ENCODE measurements at regions of chr14 and their contacts with region 1.

Region 1: DNA sequence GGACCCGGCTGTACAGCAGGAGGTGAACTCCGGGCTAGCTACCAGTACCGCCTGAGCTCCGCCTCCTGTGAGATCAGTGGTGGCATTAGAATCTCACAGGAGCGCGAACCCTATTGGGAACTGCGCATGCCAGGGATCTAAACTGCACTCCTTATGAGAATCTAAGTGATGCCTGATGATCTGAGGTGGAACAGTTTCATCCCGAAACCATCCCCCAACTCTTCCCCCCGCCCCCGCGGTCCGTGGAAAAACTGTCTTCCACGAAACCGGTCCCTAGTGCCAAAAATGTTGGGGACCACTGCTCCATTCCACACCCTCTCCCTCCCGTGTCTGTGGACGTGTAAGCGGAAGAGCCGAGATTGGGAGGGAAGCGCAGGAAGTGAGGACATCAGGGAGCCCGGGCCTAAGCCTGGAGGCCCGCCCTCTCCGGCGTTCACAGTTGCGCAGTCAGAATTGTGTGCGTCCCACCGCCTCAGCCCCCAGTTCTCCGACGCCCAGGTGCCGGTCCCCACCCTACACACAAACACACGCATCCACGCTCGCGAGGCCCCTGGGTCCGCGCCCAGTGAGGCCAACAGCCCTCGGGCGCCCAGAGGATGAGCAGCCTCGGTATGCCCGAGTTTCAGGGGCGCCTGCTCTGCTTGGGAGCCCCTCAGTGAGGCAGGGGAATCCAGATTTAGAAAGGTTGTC is 1.8 kb upstream of the RNASE4 start:
- DNase-seq: peak; percentile 95
- H3K4me3 ChIP-seq: peak overlapping the region; percentile 69 to 94 (median 82)
- H3K27ac ChIP-seq: peak overlapping the region; percentile 99 to 100 (median 100)
- H3K4me1 ChIP-seq: peaks cover 15 to 56% (median 48%) of the 10 kb centered on the region in 4 donors
- H3K27me3 ChIP-seq: no peaks in the 10 kb centered on the region
- CTCF ChIP-seq: no peak
- EP300 ChIP-seq: no peak
- POLR2A ChIP-seq: peak; percentile 88

Region 2: DNA sequence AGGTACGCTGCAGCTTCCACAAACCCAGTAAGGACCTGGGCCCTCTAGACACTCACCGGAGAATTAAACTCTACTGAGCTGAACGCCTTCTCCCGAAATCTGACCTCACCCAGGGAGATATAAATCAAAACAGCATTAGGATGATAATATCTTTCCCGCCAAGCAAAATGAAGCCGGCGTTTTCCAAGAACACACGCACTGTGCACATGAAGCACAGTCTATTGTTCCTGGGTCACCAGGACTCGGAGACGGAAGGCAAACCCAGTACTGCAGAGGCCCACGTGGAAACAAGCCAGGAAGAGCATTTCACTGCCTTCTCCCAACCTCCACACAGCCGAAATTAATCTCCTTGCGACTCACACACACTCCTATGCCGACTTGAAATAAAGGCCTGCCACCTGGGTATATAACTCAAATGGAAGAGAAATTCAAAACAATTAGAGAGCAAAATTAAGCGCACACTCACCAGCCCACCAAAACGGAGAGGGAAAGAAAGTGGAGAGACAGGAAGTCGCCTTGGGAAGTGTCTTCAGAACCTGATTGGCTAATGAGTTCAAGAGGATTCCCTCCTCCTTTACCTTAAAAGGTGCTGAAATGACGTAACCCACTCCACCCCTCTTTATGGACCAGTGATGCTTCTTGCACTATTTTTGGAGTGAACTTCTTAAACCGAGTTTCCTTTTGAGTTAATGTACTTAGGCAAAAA is 349.6 kb before region 1 on chr14 and contains the start of gene CCNB1IP1:
- intact Hi-C with region 1: loop called (anchors 5 kb)
- DNase-seq: peak; percentile 92
- H3K4me3 ChIP-seq: peak within 1 kb of the TSS; percentile 61 to 68 (median 66)
- H3K27ac ChIP-seq: peak within 1 kb of the TSS; percentile 89 to 92 (median 90)
- H3K4me1 ChIP-seq: peaks cover 11 to 44% (median 41%) of the 10 kb centered on the region in 4 donors
- H3K27me3 ChIP-seq: no peaks in the 10 kb centered on the region
- CTCF ChIP-seq: no peak
- EP300 ChIP-seq: no peak
- POLR2A ChIP-seq: peak; percentile 11
- total RNA-seq, gene CCNB1IP1: 31.8 to 60.6 (median 42.0) TPM

Region 3: GRCh38 chr14:20413045-20413799 is 269.4 kb before region 1 on chr14 and contains the start of gene TEP1:
- intact Hi-C with region 1: loop called (anchors 5 kb)
- DNase-seq: peak; percentile 96
- H3K4me3 ChIP-seq: peak within 1 kb of the TSS; percentile 68 to 93 (median 84)
- H3K27ac ChIP-seq: peak within 1 kb of the TSS; percentile 88 to 99 (median 98)
- H3K4me1 ChIP-seq: peaks cover 16 to 27% (median 26%) of the 10 kb centered on the region in 4 donors
- H3K27me3 ChIP-seq: no peaks in the 10 kb centered on the region
- CTCF ChIP-seq: no peak
- EP300 ChIP-seq: no peak
- POLR2A ChIP-seq: peak; percentile 67
- total RNA-seq, gene TEP1: 17.2 to 28.8 (median 22.9) TPM

Region 4: GRCh38 chr14:20461274-20462001 is 221.1 kb before region 1 on chr14 and contains the start of gene PIP4P1:
- intact Hi-C with region 1: loop called (anchors 2 kb)
- DNase-seq: peak; percentile 100
- H3K4me3 ChIP-seq: peak within 1 kb of the TSS; percentile 74 to 99 (median 94)
- H3K27ac ChIP-seq: peak within 1 kb of the TSS; percentile 95 to 97 (median 96)
- H3K4me1 ChIP-seq: peaks cover 22 to 38% (median 31%) of the 10 kb centered on the region in 4 donors
- H3K27me3 ChIP-seq: no peaks in the 10 kb centered on the region
- CTCF ChIP-seq: peak in 1 of 3 experiments; percentile 15
- EP300 ChIP-seq: no peak
- POLR2A ChIP-seq: peak; percentile 85
- total RNA-seq, gene PIP4P1: 18.7 to 27.9 (median 24.5) TPM

Region 5: DNA sequence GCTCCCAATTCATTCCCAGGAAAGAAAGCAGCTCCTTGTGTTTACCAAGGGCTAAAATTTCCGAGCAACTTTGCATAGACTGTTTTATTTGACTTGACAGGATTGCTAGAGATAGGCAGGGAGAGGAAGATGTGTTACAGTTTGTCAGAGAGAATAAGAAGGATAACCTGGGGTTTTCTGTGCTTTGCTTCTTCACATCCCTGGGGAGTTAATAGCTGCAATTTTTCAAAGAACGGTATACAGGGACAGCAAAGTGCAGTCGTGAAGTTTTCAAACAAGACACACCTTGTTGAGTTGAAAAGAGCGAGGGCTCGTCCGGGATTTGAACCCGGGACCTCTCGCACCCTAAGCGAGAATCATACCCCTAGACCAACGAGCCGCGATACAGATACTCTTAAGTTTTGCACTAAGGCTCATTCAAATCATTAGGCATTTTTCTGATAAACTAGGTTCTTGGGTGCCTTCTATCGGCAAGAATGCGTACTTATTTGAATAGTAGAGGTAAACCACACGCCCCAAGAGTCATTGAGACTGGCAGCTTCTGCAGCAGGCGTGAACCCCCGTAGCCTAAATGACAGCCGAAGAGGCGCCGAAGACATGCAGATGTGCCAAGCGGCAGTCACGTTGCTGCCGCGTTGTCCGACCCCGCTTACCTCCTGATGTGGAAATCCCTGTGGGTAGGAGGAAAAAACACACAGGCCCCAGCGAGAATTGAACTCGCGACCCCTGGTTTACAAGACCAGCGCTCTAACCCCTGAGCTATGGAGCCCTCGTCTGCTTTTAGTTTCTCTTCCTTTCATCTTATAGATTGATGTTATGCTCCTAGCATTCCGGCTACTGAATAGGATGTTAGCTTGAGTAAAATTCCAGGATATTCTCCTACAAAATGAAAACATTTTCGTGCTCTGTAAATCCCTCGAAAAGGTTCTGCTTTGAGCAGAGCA is 69.2 kb before region 1 on chr14:
- intact Hi-C with region 1: loop called (anchors 2 kb)
- DNase-seq: peak; percentile 97
- H3K4me3 ChIP-seq: peak overlapping the region; percentile 51 to 68 (median 57)
- H3K27ac ChIP-seq: peak overlapping the region; percentile 74 to 83 (median 78)
- H3K4me1 ChIP-seq: peaks cover 4 to 45% (median 30%) of the 10 kb centered on the region in 4 donors
- H3K27me3 ChIP-seq: no peaks in the 10 kb centered on the region
- CTCF ChIP-seq: peak; percentile 68 to 89 (median 84)
- EP300 ChIP-seq: no peak
- POLR2A ChIP-seq: no peak

Region 6: DNA sequence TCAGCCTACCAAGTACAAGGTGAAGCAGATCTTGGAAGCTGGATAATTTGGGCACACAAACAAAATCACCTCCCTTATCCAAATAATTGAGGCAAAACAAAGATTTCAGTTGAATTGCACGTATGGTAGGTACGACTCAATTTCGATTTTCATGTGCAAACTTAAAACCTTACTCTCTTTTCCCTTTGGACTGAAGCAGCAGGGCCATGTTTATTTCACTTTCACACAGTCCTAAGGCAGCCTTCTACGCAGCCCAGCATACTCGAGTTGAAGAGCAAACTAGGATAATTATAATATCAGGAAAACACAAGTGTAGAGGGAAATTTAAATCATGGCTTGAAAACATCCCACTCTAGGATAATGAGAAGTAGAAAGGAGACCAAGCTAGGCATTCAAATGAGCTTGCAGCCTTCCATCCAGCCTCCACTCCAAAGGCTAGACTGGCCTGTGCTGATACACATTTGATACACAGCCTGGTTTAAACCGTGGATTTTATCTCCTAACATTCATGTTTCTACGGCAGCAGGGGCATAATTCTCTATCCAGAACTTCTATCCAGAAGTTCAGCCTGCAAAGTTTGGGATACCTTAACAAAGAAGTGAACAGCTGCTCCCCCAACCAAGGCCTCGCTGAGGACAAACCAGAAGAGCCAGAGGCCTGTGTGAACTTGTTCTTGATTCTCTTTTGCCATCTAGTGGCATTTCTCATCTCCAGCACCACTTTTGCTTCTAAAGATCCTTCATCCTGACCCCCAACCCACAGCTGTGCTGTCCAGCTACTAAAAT is 357.2 kb after region 1 on chr14:
- intact Hi-C with region 1: no loop called
- DNase-seq: no peak
- H3K4me3 ChIP-seq: peak overlapping the region in 2 of 4 donors; percentile 4 to 24
- H3K27ac ChIP-seq: peak overlapping the region; percentile 74 to 81 (median 77)
- H3K4me1 ChIP-seq: peaks cover 44 to 48% (median 44%) of the 10 kb centered on the region in 4 donors
- H3K27me3 ChIP-seq: no peaks in the 10 kb centered on the region
- CTCF ChIP-seq: peak; percentile 77 to 82 (median 81)
- EP300 ChIP-seq: no peak
- POLR2A ChIP-seq: no peak

Region 7: DNA sequence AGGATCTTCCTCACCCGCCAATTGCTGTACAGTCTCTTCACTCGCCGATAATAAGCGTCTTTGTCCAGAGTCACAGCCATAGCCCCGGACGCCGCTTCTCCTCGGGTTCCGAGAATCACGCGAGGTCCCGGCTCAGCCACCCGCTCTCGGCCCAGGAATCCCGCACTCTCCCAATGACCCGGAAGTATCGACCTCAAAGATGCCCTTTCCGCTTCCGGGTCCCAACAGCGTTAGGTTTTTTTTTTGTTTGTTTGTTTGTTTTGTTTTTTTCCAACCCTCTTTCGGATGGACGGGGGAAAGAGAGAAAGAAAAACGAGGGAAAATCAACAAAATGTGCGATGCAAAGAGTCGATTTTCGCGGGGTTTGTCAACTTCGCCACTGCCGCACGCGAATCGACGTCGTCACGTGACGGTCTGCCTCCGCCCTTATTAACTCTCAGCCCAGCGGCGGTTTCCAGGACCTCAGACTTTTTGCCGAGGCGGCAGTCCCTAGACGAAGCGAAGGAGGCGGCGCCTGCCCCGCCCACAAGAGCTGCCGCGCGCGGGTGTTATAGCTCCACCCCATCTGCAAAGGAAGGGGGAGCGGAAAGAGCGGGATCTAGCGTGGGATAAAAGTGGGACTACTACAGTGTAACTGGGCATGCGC is 701.4 kb after region 1 on chr14 and contains the start of gene SUPT16H:
- intact Hi-C with region 1: loop called (anchors 10 kb)
- DNase-seq: peak; percentile 99
- H3K4me3 ChIP-seq: peak within 1 kb of the TSS; percentile 63 to 88 (median 84)
- H3K27ac ChIP-seq: peak within 1 kb of the TSS; percentile 86 to 91 (median 87)
- H3K4me1 ChIP-seq: peaks cover 20 to 44% (median 40%) of the 10 kb centered on the region in 4 donors
- H3K27me3 ChIP-seq: no peaks in the 10 kb centered on the region
- CTCF ChIP-seq: no peak
- EP300 ChIP-seq: no peak
- POLR2A ChIP-seq: no peak
- total RNA-seq, gene SUPT16H: 52.7 to 74.3 (median 60.5) TPM

Measured in esophagus muscularis mucosa (tissue), 4 donors.